Left colon (tissue), 2 donors: ENCODE measurements at regions of chr6 and their contacts with region 1.

Region 1: GRCh38 chr6:53979468-53980067 is 131.7 kb upstream of the MLIP start:
- DNase-seq: no peak
- ATAC-seq: no peak

Region 2: GRCh38 chr6:53611342-53611741 is 368.2 kb before region 1 on chr6:
- intact Hi-C with region 1: no loop called
- DNase-seq: no peak
- ATAC-seq: peak; percentile 72

Region 3: GRCh38 chr6:55069132-55069781 is 1089.7 kb after region 1 on chr6:
- intact Hi-C with region 1: loop called in 1 of 2 experiments (anchors 5 kb)
- DNase-seq: peak in 1 of 2 donors; percentile 29
- ATAC-seq: peak; percentile 60

Region 4: DNA sequence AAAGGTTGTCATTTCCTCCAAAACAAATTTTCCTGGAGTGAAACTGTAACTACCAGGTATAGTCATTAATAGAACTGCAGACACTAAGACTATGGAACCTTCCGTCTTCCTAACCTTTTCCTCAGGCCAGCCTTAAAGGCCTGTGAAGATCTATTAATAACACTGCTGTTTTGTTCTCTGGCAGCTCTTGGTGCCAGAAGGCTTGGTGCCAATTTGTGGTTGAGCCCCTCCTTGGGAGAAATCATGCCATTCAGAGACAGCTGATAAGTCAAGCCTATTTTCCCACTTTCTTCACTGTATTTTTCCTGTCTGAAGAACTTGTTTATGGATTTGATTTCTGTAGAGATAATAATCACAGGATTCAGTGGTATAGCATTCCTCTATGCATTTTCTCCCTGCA is 1259.5 kb after region 1 on chr6:
- intact Hi-C with region 1: loop called in 1 of 2 experiments (anchors 10 kb)
- DNase-seq: no peak
- ATAC-seq: no peak